Activated B cell treated with CpG ODN at 0.5 μM for 24 hours (primary cell): ENCODE measurements at regions of chr1 and their contacts with region 1.

Region 1: GRCh38 chr1:156500797-156501499 is 373 bp upstream of the MEF2D start:
- DNase-seq: peak; percentile 94
- ATAC-seq: peak; percentile 65
- H3K4me3 Mint-ChIP-seq: peak overlapping the region; percentile 94
- H3K27ac Mint-ChIP-seq: peak overlapping the region; percentile 97
- H3K4me1 Mint-ChIP-seq: peaks cover 78% of the 10 kb centered on the region
- H3K27me3 Mint-ChIP-seq: no peaks in the 10 kb centered on the region
- CTCF ChIP-seq: no peak

Region 2: DNA sequence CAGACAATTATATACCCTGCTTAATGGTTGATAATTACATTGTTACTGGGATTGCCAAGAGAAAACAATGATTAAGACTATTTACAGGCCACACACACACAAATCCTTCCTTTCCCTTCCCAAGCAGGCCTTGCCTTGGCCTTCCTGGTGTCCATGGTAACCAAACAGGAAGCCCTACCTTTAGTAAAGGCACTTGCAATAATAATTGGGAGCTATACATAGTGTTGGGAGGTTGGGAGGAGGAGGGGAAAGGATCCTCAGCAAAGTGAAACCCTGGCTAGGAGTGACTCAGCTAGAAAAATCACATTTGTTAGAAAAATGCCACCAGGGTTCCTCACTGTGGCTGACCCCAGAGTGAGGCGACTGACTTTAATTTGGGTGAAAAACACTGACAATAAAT is 1770.7 kb before region 1 on chr1:
- CTCF ChIA-PET with region 1: no interaction called
- POLR2A ChIA-PET with region 1: no interaction called
- intact Hi-C with region 1: no loop called
- DNase-seq: no peak
- ATAC-seq: no peak
- H3K4me3 Mint-ChIP-seq: no peak overlapping the region
- H3K27ac Mint-ChIP-seq: no peak overlapping the region
- H3K4me1 Mint-ChIP-seq: no peaks in the 10 kb centered on the region
- H3K27me3 Mint-ChIP-seq: peaks cover 21% of the 10 kb centered on the region
- CTCF ChIP-seq: no peak

Region 3: DNA sequence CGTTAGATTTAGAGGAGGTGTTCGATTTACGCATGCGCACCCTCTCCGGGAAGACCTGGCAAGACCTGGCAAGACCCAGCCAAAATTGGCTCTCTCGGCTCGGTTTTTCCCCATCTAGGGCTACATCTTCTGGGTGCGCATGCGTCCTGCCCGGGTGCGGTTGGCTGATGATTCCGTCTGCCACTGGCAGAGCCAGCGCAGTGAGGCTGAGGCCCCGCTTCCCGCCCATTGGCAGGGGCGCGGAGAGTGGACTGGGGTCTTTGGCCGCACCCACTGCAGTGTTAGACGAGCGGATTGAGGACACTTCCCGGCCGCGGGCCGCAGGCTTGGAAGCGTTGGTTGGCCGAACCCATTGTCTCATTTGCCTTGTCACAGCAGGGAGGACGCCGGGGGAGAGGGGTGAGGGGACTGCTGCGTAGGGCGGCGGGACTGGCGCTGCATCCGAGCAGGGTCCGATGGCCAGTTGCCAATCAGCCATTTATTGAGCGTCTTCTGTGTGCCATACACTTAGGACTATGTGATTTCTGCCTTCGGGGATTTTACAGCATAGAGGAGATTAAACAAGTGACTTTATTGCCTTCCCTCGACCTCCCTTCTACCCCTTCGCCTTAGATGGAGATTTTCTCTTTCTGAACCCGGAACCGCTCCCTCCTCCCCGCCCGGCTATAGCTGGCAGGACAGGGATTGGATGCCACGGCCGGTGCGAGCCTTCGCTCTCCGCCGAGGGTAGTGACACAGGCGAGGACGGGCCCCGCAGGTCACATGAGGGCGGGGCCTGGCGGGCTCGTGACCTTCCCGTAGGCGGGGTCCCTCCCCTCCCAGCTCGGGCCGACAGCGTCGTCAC is 44.1 kb before region 1 on chr1:
- CTCF ChIA-PET with region 1: interaction called, 9 read pairs
- POLR2A ChIA-PET with region 1: interaction called, 88 read pairs
- intact Hi-C with region 1: loop called (anchors 1 kb)
- DNase-seq: peak; percentile 88
- ATAC-seq: peak; percentile 84
- H3K4me3 Mint-ChIP-seq: peak overlapping the region; percentile 91
- H3K27ac Mint-ChIP-seq: peak overlapping the region; percentile 97
- H3K4me1 Mint-ChIP-seq: peaks cover 19% of the 10 kb centered on the region
- H3K27me3 Mint-ChIP-seq: no peaks in the 10 kb centered on the region
- CTCF ChIP-seq: no peak

Region 4: DNA sequence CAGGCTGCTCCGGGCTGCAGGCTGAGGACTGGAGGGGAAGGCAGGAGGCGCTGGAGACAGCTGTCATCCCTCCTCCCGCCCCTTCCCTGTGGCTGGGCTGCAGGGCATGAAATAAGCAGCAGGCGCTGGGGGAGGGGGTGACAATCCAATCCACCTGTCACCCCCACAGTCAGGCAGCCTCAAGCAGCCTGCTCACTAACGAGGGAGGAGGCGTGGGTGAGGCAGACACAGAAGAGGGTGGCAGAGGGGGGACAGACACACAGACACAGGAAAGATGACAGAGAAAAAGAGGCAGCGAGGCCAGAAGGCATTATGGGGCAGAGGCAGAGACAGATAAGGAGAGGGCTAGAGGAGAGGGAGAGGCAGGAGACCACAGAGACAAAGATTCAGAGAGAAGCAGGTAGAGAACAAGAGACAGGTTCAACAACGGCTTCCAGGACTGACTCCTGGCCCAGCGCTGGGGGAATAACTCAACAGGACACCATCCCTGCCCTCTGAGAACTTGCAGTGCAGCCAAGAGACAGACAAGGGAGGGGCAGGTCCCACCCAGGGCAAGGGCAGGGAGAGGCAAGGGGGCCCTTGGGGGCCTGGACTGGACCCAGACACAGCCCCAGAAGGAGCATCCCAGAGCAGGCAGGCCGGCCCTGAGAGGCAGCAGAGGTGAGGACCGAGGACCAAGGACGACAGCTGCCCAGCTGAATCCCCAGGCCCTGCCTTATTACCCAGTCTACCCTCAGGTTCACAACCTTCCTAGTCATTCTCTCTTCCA is 11.6 kb before region 1 on chr1:
- CTCF ChIA-PET with region 1: interaction called, 22 read pairs
- POLR2A ChIA-PET with region 1: interaction called, 1,179 read pairs
- intact Hi-C with region 1: loop called (anchors 1 kb)
- DNase-seq: no peak
- ATAC-seq: no peak
- H3K4me3 Mint-ChIP-seq: peak overlapping the region; percentile 88
- H3K27ac Mint-ChIP-seq: peak overlapping the region; percentile 97
- H3K4me1 Mint-ChIP-seq: peaks cover 96% of the 10 kb centered on the region
- H3K27me3 Mint-ChIP-seq: no peaks in the 10 kb centered on the region
- CTCF ChIP-seq: no peak

Region 5: DNA sequence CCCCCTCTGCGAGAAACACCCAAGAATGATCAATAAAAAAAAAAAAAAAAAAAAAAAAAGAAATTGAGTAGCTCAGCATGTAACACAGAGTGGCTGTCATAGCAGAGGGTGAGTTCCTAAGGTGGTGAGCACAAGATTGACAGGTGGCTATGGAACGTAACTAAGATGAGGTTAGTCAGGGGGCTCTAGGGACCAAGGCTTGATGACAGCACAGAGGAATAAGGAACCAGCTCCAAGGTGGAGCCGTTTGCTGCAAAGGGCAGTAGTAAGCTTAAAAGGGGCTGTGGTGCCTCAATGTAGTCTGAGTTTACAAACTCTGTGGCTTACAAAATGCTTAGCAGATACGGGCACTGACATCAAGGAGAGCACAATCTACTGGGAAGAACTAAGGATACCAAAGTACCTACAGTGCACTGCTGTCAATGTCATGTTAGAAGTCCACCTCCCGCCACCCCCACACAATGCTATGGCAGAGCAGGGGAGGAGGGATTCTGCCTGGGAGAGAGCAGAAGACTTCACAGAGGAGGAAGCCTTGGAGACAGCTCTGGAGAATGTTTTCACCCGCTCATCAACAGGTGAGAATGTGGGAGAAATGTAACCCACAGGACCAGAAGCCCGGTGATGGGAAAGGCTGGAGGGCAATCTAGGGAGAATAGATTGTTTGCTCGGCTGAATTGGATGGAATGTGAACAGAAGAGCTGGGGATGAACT is 58.3 kb after region 1 on chr1:
- CTCF ChIA-PET with region 1: no interaction called
- POLR2A ChIA-PET with region 1: interaction called, 12 read pairs
- intact Hi-C with region 1: no loop called
- DNase-seq: no peak
- ATAC-seq: peak; percentile 37
- H3K4me3 Mint-ChIP-seq: no peak overlapping the region
- H3K27ac Mint-ChIP-seq: no peak overlapping the region
- H3K4me1 Mint-ChIP-seq: peaks cover 10% of the 10 kb centered on the region
- H3K27me3 Mint-ChIP-seq: no peaks in the 10 kb centered on the region
- CTCF ChIP-seq: no peak

Region 6: DNA sequence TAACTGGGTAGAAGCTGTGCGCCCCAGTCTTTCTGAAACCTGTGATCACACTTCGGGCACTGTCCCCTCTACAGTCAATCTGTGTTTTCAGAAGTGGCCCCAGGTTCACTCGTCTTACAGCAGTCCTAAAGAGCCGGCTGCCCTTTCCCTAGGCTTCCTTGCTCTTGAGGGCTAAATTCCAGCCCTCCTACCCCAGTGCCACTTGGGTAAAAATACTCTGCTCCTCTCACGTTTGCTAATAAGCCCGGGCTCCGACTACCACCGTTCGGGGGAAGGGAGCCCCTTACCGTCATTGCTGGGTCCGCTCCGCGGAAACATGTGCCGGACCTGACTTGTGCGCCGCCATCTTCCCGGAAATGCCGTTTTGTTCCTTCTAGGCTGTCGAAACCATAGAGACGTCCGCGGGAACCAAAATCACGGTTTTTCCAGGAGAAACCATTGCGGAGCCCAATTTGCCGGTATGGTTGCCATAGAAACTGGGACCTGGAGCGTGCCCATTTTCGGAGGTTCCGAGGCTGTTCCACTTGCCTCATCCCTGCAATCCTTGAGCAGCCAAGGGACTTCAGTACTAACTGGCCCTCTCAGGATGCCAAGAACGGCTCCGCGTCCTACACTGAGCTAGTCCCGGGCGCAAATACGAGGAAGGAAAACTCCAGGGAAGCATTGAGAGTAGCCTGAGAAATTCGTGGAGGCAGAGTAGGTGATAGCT is 100.3 kb after region 1 on chr1 and contains the start of gene GPATCH4:
- CTCF ChIA-PET with region 1: interaction called, 6 read pairs
- POLR2A ChIA-PET with region 1: interaction called, 32 read pairs
- intact Hi-C with region 1: loop called (anchors 1 kb)
- DNase-seq: peak; percentile 66
- ATAC-seq: peak; percentile 74
- H3K4me3 Mint-ChIP-seq: peak within 1 kb of the TSS; percentile 99
- H3K27ac Mint-ChIP-seq: peak within 1 kb of the TSS; percentile 99
- H3K4me1 Mint-ChIP-seq: peaks cover 41% of the 10 kb centered on the region
- H3K27me3 Mint-ChIP-seq: no peaks in the 10 kb centered on the region
- CTCF ChIP-seq: no peak
- total RNA-seq, gene GPATCH4: 64.6 and 71.8 TPM in 2 replicates

Region 7: GRCh38 chr1:156740679-156741612 is 240.0 kb after region 1 on chr1 and contains the start of gene MRPL24:
- CTCF ChIA-PET with region 1: no interaction called
- POLR2A ChIA-PET with region 1: interaction called, 7 read pairs
- intact Hi-C with region 1: loop called (anchors 2 kb)
- DNase-seq: peak; percentile 87
- ATAC-seq: peak; percentile 89
- H3K4me3 Mint-ChIP-seq: peak within 1 kb of the TSS; percentile 98
- H3K27ac Mint-ChIP-seq: peak within 1 kb of the TSS; percentile 97
- H3K4me1 Mint-ChIP-seq: peaks cover 33% of the 10 kb centered on the region
- H3K27me3 Mint-ChIP-seq: no peaks in the 10 kb centered on the region
- CTCF ChIP-seq: no peak
- total RNA-seq, gene MRPL24: 65.8 and 83.7 TPM in 2 replicates